Gastrocnemius medialis (tissue), 4 donors: ENCODE measurements at regions of chr1 and their contacts with region 1.

Region 1: DNA sequence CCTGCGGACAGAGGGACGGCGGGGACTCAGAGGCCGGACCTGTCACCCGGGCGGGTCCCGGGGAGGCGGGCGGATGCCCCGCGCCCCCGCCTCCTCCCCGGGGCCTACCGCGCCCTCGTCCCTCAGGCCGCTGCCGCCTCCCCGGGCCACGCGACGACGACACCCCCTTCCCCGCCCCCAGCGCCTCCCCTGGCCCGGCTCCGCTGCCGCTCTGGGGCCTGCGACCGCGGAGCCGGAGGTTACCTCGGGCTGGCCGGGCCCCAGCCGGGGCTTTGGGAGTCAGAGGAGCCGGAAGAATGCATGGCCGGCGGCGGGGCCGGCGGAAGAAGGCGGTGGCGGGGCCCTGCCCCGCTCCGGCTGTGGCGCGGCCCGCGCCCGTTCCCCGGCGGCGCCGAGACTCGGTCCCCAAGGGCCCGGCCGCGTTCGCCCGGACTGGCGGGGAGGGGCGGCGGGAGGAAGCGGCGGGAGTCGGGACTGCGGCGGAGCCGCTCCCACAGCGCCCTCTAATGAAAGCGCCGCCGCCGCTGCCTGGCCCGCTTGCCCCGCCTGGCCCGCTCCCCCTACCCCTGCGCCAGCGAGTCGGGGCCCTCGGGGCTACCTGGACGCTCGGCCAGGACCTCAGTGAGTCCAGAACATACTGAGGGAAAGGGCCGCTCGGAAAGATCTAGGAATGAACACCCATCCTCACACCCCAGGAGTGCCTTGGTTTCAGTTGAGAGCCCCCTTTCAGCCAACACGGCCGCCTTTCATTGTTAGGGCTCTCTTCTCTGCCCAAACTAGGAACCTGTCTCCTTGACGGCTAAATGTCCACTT is at the start of gene LPGAT1:
- DNase-seq: peak; percentile 61 to 63
- ATAC-seq: peak; percentile 87 to 89
- H3K4me3 ChIP-seq: peak within 1 kb of the TSS; percentile 62 to 85 (median 68)
- H3K27ac ChIP-seq: peak within 1 kb of the TSS; percentile 74 to 92 (median 88)
- H3K4me1 ChIP-seq: peaks cover 13 to 17% of the 10 kb centered on the region in 2 donors
- H3K27me3 ChIP-seq: no peaks in the 10 kb centered on the region
- CTCF ChIP-seq: peak; percentile 51 to 87 (median 65)
- POLR2A ChIP-seq: peak; percentile 22 to 44
- total RNA-seq, gene LPGAT1: 11.2 to 51.4 (median 21.5) TPM

Region 2: DNA sequence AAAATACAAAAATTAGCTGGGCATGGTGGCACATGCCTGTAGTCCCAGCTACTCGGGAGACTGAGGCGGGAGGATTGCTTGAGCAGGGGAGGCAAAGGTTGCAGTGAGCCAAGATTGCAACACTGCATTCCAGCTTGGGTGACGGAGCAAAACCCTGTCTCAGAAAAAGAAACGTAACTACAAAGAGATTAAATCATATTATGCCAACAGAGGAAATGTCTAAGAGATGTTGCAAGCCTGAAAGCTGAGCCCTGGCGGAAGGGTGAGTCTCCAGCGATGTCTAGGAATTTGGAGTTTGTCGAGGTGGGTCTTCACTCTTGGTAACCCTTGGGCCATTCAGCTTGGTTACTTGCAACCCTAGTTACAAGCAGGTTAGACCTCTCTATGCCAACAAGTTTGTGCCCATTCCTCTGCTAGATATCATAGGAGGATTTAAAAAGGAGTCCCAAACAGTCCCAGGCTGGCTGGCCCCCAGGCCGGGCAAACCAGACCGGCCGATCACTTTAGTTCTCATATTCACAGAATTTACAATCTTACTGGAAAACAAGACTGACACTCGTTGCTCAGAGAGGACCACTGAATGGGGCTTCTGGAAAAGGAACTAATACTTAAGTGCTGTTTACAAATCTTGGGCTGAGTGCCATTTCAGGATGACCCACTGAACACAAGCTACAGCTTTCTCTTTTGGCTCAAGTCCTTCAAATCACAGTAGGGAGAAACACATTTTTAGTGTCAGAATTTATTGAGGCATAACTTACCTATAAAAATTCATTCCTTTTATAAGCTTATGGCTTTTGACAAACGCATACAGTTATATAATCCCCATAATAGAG is 278.7 kb before region 1 on chr1:
- in situ Hi-C with region 1: loop called in 1 of 4 experiments (anchors 25 kb)
- intact Hi-C with region 1: no loop called
- DNase-seq: no peak
- ATAC-seq: no peak
- H3K4me3 ChIP-seq: no peak overlapping the region
- H3K27ac ChIP-seq: no peak overlapping the region
- H3K4me1 ChIP-seq: no peaks in the 10 kb centered on the region
- H3K27me3 ChIP-seq: no peaks in the 10 kb centered on the region
- CTCF ChIP-seq: no peak
- POLR2A ChIP-seq: no peak

Region 3: DNA sequence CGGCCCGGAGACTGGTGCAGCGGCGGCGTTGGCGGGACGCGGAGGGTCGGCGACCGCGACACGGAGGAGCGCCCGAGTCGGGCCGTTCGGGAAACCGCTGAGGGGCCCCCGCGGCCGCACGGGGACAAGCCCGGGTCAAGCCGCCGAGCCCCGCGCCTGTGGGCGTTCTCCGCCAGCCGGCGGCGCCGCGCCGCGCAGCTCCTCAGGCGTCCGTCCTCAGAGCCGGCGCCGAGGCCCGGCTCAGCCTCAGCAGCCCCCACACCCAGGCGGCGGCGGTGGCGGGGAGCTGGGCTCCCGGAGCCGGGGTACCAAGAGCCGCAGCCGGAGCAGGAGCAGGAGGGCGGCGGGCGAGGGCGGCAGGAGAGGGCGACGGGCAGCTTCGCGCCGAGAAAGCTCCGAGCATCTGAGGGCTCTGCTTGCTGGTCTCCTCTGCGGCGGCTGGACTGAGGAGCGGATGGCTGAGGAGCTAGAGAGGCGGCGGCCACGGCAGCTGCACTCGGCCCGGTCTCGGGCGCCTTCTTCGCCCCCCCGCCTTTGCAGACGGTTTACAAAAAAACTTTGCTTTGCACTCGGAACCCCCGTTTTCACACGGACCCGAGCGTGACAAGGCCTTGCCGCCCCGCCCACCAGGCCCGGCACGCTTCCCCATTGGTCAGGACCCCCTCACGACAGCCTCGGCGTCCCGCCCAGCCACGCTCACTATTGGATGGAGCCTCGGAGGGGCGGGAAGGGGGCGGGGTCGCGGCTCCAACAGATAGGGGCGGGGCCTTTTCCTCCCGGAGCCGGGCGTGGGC is 251.7 kb before region 1 on chr1 and contains the start of gene SLC30A1:
- in situ Hi-C with region 1: loop called in 1 of 4 experiments (anchors 25 kb)
- intact Hi-C with region 1: loop called (anchors 5 kb)
- DNase-seq: peak; percentile 97 to 98
- ATAC-seq: peak; percentile 89
- H3K4me3 ChIP-seq: peak within 1 kb of the TSS; percentile 76 to 88 (median 84)
- H3K27ac ChIP-seq: peak within 1 kb of the TSS; percentile 78 to 90 (median 86)
- H3K4me1 ChIP-seq: peaks cover 26 to 30% of the 10 kb centered on the region in 2 donors
- H3K27me3 ChIP-seq: no peaks in the 10 kb centered on the region
- CTCF ChIP-seq: no peak
- POLR2A ChIP-seq: peak; percentile 77 to 87
- total RNA-seq, gene SLC30A1: 1.3 to 3.0 (median 2.1) TPM

Region 4: DNA sequence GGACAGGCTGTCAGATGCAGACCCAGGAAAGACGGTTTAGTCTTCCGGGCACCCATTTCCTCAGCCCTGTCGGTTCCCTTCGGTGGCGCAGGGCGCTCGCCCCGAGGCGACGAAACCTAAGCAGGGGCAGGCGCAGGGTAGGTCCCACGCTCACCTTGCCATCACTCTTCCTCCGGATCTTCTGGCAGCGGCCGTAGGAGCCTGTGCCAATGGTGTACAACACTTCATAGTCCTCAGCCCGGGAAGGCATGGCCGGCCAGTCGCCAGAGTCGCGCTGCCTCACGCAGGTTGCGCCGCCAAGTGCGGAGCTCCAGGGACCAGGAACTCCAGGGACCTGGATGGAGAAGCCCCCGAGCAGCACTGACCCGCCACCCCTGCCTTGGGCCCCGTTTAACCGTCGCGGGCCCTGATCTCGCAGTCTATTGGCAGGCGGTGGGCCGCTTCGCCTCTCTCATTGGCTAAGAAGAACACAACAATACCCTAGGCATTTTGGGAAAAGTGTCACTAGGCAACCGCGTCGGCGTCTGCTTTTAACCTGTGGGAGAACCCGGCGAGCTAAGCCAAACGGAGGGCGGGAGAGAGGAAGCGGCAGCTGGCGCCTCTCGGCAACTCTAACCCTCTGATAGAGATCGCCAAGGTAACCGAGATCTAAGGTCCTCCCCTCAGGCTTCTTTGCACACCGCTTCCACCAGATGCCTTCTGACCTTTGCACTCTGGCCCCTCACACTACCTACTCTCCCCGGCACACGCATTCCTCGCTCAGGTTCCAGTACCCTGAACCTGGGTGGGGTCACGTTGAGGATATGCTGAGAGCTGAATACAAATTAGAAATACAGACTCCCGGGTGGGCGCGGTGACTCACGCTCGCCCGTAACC is 155.1 kb before region 1 on chr1 and contains the start of gene NEK2:
- in situ Hi-C with region 1: loop called in 2 of 4 experiments (anchors 10 kb)
- intact Hi-C with region 1: loop called (anchors 1 kb)
- DNase-seq: peak; percentile 48 to 68
- ATAC-seq: peak; percentile 92 to 95
- H3K4me3 ChIP-seq: peak within 1 kb of the TSS; percentile 48 to 74 (median 52)
- H3K27ac ChIP-seq: no peak within 1 kb of the TSS
- H3K4me1 ChIP-seq: peaks cover 8 to 12% of the 10 kb centered on the region in 2 donors
- H3K27me3 ChIP-seq: peaks cover 0 to 3% (median 0%) of the 10 kb centered on the region in 3 donors
- CTCF ChIP-seq: no peak
- POLR2A ChIP-seq: no peak
- total RNA-seq, gene NEK2: not detected

Region 5: DNA sequence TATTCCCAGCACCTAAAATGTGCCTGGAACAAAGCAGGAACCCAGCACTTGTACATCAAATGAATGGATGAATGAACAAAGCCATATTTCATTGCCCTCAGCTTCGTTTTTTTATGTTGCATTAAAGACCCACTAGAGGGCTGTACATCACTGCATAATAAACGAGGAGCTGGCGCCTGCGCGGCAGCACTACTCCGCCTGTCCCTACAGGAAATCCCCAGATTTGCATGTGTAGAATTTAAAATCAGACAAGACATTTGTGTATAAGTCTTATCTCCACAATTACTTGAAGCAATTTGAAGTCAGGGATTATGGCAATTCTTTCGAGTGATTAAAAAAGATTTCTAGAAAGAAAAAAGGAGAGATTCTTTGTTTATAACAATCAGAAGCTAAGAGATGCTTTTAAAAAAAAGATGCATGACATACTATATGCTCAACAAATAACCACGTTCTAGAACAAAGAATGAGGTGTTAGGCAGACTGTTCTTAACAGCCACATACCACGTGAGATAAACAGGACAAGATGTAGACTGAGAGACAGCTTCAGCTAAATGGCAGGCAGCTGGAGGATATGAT is 149.7 kb before region 1 on chr1:
- in situ Hi-C with region 1: loop called in 2 of 4 experiments (anchors 10 kb)
- intact Hi-C with region 1: loop called (anchors 1 kb)
- DNase-seq: peak; percentile 15 to 44
- ATAC-seq: peak; percentile 75 to 84
- H3K4me3 ChIP-seq: no peak overlapping the region
- H3K27ac ChIP-seq: no peak overlapping the region
- H3K4me1 ChIP-seq: peaks cover under 1 to 2% of the 10 kb centered on the region in 2 donors
- H3K27me3 ChIP-seq: no peaks in the 10 kb centered on the region
- CTCF ChIP-seq: peak; percentile 38 to 75 (median 62)
- POLR2A ChIP-seq: no peak

Region 6: GRCh38 chr1:211698161-211699026 is 132.1 kb before region 1 on chr1:
- in situ Hi-C with region 1: no loop called
- intact Hi-C with region 1: loop called (anchors 2 kb)
- DNase-seq: peak in 1 of 2 donors; percentile 29
- ATAC-seq: peak; percentile 30 to 53
- H3K4me3 ChIP-seq: no peak overlapping the region
- H3K27ac ChIP-seq: no peak overlapping the region
- H3K4me1 ChIP-seq: no peaks in the 10 kb centered on the region
- H3K27me3 ChIP-seq: no peaks in the 10 kb centered on the region
- CTCF ChIP-seq: peak; percentile 48 to 76 (median 67)
- POLR2A ChIP-seq: no peak

Region 7: GRCh38 chr1:212007886-212008285 is 177.3 kb after region 1 on chr1:
- in situ Hi-C with region 1: no loop called
- intact Hi-C with region 1: no loop called
- DNase-seq: no peak
- ATAC-seq: no peak
- H3K4me3 ChIP-seq: no peak overlapping the region
- H3K27ac ChIP-seq: no peak overlapping the region
- H3K4me1 ChIP-seq: no peaks in the 10 kb centered on the region
- H3K27me3 ChIP-seq: no peaks in the 10 kb centered on the region
- CTCF ChIP-seq: no peak
- POLR2A ChIP-seq: no peak